ENCODE measurements at regions of chr3 and their contacts with region 1.

Region 1: DNA sequence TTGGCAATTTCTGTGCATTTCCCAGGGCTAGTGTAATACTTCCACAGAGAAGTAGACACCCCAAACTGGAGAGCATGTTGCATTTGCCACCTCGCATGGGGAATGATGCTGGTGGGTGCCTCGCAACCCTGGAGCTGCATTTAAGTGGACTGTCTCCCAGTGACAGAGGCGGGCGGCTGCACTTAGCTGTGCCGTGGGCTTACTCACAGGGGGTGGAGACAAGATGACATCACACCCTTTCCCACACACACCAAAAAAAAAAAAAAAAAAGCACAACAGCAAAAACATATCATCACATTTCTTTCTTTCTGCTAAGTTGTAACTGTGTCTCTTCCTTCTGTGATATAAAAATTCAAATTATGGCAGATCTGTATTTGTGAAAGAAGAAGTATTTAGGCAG is at the start of gene ABI3BP:
- DNase-seq: peak; percentile 84
- ATAC-seq: peak; percentile 89
- H3K4me3 ChIP-seq: peak within 1 kb of the TSS; percentile 66
- H3K27ac ChIP-seq: peak within 1 kb of the TSS; percentile 17
- H3K4me1 ChIP-seq: peaks cover 14% of the 10 kb centered on the region
- H3K27me3 ChIP-seq: no peaks in the 10 kb centered on the region
- CTCF ChIP-seq: no peak
- total RNA-seq, gene ABI3BP: 23.4 and 31.6 TPM in 2 replicates

Region 2: DNA sequence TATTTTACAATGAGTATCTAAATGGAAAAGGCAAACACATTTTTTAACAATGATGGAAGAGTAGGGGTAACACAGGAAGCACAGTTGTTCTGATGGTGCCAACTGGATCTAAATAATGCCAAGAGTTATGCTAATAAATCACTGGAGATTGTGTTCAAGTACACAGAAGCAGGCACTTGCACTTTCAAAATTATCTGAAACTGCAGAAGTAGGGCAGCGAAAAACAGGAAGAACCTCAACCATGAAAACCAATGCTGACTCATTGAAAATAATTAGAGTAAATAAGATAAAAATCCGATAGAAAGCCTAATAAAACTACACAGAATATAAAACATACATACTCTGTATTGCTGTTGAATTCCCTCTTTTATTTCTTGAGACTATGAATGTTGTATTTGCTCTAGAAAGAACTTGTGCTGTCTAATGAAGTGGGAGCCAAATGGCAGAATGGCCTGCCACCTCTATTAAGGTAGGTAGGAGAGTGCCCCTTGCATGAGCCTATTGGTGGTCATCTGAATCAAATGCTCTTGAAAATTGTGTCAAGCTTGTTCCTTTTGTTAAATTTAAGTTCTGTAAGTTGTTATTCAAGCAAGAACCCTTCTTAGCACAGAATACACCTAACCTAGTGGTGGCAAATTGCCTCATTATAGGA is 93.7 kb before region 1 on chr3:
- CTCF ChIA-PET with region 1: no interaction called
- POLR2A ChIA-PET with region 1: no interaction called
- intact Hi-C with region 1: loop called (anchors 1 kb)
- DNase-seq: peak; percentile 89
- ATAC-seq: peak; percentile 66
- H3K4me3 ChIP-seq: peak overlapping the region; percentile 32
- H3K27ac ChIP-seq: peak overlapping the region; percentile 92
- H3K4me1 ChIP-seq: peaks cover 64% of the 10 kb centered on the region
- H3K27me3 ChIP-seq: no peaks in the 10 kb centered on the region
- CTCF ChIP-seq: no peak

Region 3: DNA sequence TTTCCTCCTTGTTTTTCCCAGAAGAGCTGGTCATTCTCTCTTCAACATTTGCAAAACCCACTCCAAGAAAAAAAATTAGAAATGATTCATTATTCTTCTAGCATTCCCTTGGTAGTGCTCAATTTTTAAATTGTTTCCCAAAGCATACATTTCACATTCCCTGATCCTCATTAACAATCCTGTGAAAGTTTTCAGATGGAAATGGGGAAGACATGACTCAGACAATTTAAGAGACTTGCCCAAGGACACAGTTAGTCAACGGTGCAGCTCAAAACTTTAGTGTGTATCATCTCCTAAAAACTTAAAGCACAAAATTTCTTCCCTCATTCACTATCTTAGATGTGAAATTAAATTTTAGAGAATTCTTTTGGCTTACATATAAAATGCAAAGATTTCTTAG is 17.0 kb after region 1 on chr3:
- CTCF ChIA-PET with region 1: no interaction called
- POLR2A ChIA-PET with region 1: interaction called, 22 read pairs
- intact Hi-C with region 1: no loop called
- DNase-seq: no peak
- ATAC-seq: peak; percentile 58
- H3K4me3 ChIP-seq: no peak overlapping the region
- H3K27ac ChIP-seq: peak overlapping the region; percentile 35
- H3K4me1 ChIP-seq: no peaks in the 10 kb centered on the region
- H3K27me3 ChIP-seq: no peaks in the 10 kb centered on the region
- CTCF ChIP-seq: no peak

Region 4: GRCh38 chr3:101069901-101070798 is 76.8 kb after region 1 on chr3:
- CTCF ChIA-PET with region 1: no interaction called
- POLR2A ChIA-PET with region 1: no interaction called
- intact Hi-C with region 1: loop called (anchors 2 kb)
- DNase-seq: peak; percentile 70
- ATAC-seq: peak; percentile 23; the same call in 1 of the 2 replicates
- H3K4me3 ChIP-seq: no peak overlapping the region
- H3K27ac ChIP-seq: peak overlapping the region; percentile 22
- H3K4me1 ChIP-seq: peaks cover 52% of the 10 kb centered on the region
- H3K27me3 ChIP-seq: no peaks in the 10 kb centered on the region
- CTCF ChIP-seq: peak; percentile 92

Region 5: DNA sequence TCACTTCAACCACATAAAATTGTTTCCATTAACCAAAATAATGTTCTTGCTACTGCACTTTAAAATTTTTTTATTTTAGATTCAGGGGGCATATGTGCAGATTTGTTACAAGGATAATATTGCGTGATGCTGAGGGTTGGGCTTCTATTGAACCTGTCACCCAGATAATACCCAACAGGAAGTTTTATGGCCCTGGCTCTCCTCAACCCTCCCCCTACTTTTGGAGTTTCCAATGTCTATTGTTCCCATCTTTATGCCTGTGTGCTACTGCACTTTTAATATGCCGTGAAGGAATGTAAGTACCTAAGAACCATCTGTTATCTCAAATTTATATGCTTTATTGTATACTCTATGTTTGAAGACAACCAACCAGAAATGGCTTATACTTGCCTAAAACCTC is 369.1 kb after region 1 on chr3:
- CTCF ChIA-PET with region 1: no interaction called
- POLR2A ChIA-PET with region 1: no interaction called
- intact Hi-C with region 1: no loop called
- DNase-seq: no peak
- ATAC-seq: no peak
- H3K4me3 ChIP-seq: no peak overlapping the region
- H3K27ac ChIP-seq: no peak overlapping the region
- H3K4me1 ChIP-seq: no peaks in the 10 kb centered on the region
- H3K27me3 ChIP-seq: no peaks in the 10 kb centered on the region
- CTCF ChIP-seq: no peak

Region 6: GRCh38 chr3:101573449-101574387 is 580.4 kb after region 1 on chr3 and contains the start of gene PCNP:
- CTCF ChIA-PET with region 1: no interaction called
- POLR2A ChIA-PET with region 1: no interaction called
- intact Hi-C with region 1: loop called (anchors 2 kb)
- DNase-seq: peak; percentile 99
- ATAC-seq: peak; percentile 82
- H3K4me3 ChIP-seq: peak within 1 kb of the TSS; percentile 95
- H3K27ac ChIP-seq: peak within 1 kb of the TSS; percentile 85
- H3K4me1 ChIP-seq: peaks cover 19% of the 10 kb centered on the region
- H3K27me3 ChIP-seq: no peaks in the 10 kb centered on the region
- CTCF ChIP-seq: peak; percentile 97
- total RNA-seq, gene PCNP: 71.1 and 72.3 TPM in 2 replicates